Heart left ventricle (tissue), 16 donors: ENCODE measurements at regions of chr10 and their contacts with region 1.

Region 1: GRCh38 chr10:31707093-31708039 is 221.3 kb downstream of the ARHGAP12 start:
- DNase-seq: peak; percentile 84 to 86 (median 84)
- ATAC-seq: peak; percentile 72 to 92 (median 90)
- H3K4me3 ChIP-seq: peak overlapping the region in 9 of 12 donors; percentile 7 to 41 (median 31)
- H3K27ac ChIP-seq: peak overlapping the region; percentile 74 to 97 (median 87)
- H3K4me1 ChIP-seq: peaks cover 0 to 64% (median 41%) of the 10 kb centered on the region in 12 donors
- H3K27me3 ChIP-seq: no peaks in the 10 kb centered on the region
- CTCF ChIP-seq: no peak
- POLR2A ChIP-seq: no peak

Region 2: DNA sequence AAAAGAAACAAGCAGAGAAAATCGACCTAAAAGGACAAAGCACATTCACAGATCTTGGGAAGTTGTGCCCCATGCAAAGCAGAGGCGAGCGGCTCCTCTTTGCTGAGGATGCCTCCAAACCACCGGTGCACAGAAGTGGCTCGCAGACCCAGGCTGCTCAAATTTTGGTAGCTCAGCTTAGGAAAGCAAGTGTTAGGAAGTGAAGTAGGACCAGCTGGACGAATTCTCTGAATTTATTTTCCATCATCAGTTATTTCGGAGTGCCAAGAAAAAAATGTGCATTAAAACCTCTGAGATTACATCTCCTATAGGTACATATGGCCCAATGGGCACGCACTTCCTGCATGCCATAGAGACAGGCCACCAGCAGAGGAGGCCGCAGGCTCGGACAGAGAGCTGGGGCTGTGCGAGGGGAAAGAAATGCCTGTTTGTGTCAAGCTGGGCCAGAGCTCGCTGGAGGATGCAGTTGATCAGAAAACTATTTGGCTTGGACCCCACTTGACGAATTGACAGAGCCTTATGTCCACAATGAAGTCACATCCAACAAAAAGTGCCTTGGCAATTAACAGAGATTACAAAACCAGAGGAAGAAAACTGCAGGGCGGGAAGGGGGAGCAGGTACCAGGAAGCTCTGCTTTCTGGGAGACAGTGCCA is 955.6 kb before region 1 on chr10:
- intact Hi-C with region 1: loop called in 2 of 10 experiments (anchors 10 kb)
- DNase-seq: peak in 4 of 5 donors; percentile 69 to 84 (median 80)
- ATAC-seq: peak; percentile 64 to 87 (median 77)
- H3K4me3 ChIP-seq: no peak overlapping the region
- H3K27ac ChIP-seq: peak overlapping the region in 9 of 12 donors; percentile 3 to 68 (median 34)
- H3K4me1 ChIP-seq: peaks cover 0 to 23% (median 6%) of the 10 kb centered on the region in 12 donors
- H3K27me3 ChIP-seq: no peaks in the 10 kb centered on the region
- CTCF ChIP-seq: peak in 11 of 12 donors; percentile 12 to 97 (median 91)
- POLR2A ChIP-seq: no peak

Region 3: DNA sequence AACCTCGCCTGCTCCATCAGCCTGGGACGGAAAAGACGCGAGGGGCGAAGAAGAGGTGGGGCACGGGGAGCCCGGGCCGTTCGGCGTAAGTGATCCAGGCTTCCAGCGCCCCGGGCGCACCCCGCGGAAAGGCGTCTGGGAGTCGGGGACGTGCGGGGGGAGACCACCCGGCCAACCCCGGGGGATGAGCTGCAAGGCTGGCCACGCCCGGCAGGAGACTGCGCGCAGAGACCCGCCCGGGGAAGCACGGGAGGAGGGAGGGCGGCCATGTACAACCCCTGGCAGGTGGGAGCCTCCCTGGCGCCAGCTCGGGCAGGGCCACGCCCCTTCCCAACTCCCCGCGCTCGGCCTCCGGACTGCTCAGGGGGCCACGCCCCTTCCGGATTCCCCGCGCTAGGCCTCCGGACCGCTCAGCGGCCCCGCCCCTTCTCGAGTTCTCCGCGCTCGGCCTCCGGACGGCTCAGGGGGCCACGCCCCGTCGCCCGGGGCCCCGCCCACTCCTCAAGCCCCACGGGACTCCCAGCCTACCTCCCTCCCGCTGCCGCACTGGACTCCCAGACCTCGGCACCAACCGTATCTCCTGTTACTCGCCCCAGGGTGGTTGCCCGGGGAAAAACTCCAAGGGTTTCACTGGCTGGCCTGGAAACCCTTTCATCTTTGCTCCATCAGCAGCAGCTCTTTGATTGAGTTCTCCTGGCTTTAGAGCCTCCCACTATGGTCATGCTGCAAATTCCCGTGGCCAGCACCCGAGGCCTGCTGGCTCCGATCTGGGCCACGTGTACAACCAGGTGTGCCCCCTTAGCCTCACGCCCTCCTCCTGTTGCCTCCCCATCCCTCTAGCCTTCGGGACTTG is 103.9 kb before region 1 on chr10:
- intact Hi-C with region 1: loop called in 3 of 10 experiments (anchors 5 kb)
- DNase-seq: peak; percentile 97 to 98 (median 97)
- ATAC-seq: peak; percentile 93 to 97 (median 96)
- H3K4me3 ChIP-seq: peak overlapping the region; percentile 42 to 80 (median 66)
- H3K27ac ChIP-seq: peak overlapping the region; percentile 79 to 95 (median 90)
- H3K4me1 ChIP-seq: peaks cover 0 to 36% (median 15%) of the 10 kb centered on the region in 12 donors
- H3K27me3 ChIP-seq: no peaks in the 10 kb centered on the region
- CTCF ChIP-seq: peak in 6 of 12 donors; percentile 7 to 18 (median 11)
- POLR2A ChIP-seq: peak in 1 of 2 donors; percentile 64

Region 4: GRCh38 chr10:31656851-31657433 is 50.4 kb before region 1 on chr10:
- intact Hi-C with region 1: no loop called
- DNase-seq: no peak
- ATAC-seq: peak; percentile 57 to 79 (median 70)
- H3K4me3 ChIP-seq: no peak overlapping the region
- H3K27ac ChIP-seq: peak overlapping the region in 10 of 12 donors; percentile 23 to 83 (median 66)
- H3K4me1 ChIP-seq: peaks cover 0 to 15% (median 0%) of the 10 kb centered on the region in 12 donors
- H3K27me3 ChIP-seq: no peaks in the 10 kb centered on the region
- CTCF ChIP-seq: no peak
- POLR2A ChIP-seq: no peak

Region 5: GRCh38 chr10:31739711-31740110 is 32.3 kb after region 1 on chr10:
- intact Hi-C with region 1: loop called in 1 of 10 experiments (anchors 5 kb)
- DNase-seq: peak in 1 of 5 donors; percentile 47
- ATAC-seq: peak; percentile 61 to 96 (median 91)
- H3K4me3 ChIP-seq: no peak overlapping the region
- H3K27ac ChIP-seq: peak overlapping the region in 11 of 12 donors; percentile 12 to 81 (median 74)
- H3K4me1 ChIP-seq: peaks cover 0 to 18% (median 11%) of the 10 kb centered on the region in 12 donors
- H3K27me3 ChIP-seq: no peaks in the 10 kb centered on the region
- CTCF ChIP-seq: no peak
- POLR2A ChIP-seq: no peak

Region 6: DNA sequence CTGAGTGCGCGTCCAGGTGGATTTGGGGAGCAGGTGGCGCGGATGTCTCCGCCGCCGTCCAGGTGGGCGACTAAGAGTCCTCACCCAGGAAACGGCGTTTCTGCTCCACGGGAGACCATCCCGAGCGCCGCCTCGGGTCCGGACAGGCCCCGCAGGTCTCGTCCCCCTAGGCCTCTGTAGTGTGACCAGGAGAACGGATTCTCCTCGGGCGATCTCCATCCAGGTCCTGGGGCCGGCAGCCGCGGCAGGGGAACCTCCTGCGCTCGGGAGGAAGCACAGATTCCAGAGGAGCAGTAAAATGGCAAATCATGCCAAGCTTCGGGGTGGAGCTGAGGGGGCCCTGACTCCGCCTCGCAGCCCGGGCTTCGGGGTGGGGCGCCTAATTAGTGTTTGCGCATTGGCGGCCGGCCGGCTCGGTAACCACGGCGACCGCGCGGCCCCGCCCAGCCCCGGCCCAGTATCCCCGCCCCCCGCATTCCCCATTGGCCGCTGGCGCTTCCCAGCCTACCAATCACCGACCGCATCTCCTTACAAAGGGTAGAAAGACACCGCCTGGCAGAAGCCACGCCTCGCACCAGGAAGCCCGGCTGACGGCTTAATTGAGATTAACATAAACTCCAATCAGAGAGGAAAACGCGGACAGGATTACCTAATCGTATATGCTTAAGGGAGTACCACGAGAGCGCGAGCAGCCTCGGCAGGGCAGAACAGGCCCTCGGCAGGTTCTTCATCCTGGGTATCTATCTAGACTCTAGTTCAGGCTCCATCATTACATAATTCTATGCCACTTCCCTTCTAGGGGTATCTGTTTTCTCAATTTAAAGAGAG is 52.6 kb after region 1 on chr10:
- intact Hi-C with region 1: loop called in 8 of 10 experiments (anchors 2 to 10 kb)
- DNase-seq: peak; percentile 96 to 97 (median 97)
- ATAC-seq: peak; percentile 95 to 97 (median 97)
- H3K4me3 ChIP-seq: peak overlapping the region; percentile 68 to 98 (median 92)
- H3K27ac ChIP-seq: peak overlapping the region; percentile 91 to 100 (median 98)
- H3K4me1 ChIP-seq: peaks cover 0 to 44% (median 25%) of the 10 kb centered on the region in 12 donors
- H3K27me3 ChIP-seq: no peaks in the 10 kb centered on the region
- CTCF ChIP-seq: no peak
- POLR2A ChIP-seq: peak; percentile 78 to 96

Region 7: DNA sequence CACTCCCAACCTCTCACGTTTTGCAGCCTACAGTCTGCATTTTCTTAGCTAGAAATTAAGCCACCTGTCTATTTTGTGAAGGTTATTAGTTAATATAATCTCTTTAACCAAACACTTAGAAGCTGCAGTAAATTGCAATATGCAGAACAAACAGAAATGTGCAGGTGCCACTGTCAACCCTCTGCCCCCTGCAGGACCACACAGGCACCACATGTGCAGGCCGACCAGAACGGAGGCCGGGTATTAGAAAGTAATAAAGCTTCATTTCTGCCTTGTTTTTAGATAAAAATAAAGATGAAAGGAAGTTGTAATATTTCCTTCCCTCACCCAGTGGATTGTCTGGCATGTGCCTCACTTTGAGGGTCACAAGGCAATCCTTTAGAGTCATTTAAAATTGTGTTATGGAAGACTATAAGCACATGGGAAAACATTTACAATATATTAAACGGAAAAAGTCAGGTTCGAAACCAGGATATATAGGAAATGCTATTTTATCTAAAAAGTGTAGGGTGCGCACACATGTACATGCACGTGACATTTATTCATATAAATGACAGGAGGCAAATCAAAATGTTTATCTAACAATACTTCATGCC is 63.0 kb after region 1 on chr10:
- intact Hi-C with region 1: loop called in 2 of 10 experiments (anchors 1 to 2 kb)
- DNase-seq: peak in 2 of 5 donors; percentile 45 to 57
- ATAC-seq: peak in 3 of 4 donors; percentile 49 to 81 (median 62)
- H3K4me3 ChIP-seq: no peak overlapping the region
- H3K27ac ChIP-seq: peak overlapping the region in 2 of 12 donors; percentile 21 to 39
- H3K4me1 ChIP-seq: peaks cover 0 to 14% (median 2%) of the 10 kb centered on the region in 12 donors
- H3K27me3 ChIP-seq: no peaks in the 10 kb centered on the region
- CTCF ChIP-seq: peak; percentile 70 to 89 (median 81)
- POLR2A ChIP-seq: no peak